ENCODE measurements at regions of chr17 and their contacts with region 1.

Region 1: DNA sequence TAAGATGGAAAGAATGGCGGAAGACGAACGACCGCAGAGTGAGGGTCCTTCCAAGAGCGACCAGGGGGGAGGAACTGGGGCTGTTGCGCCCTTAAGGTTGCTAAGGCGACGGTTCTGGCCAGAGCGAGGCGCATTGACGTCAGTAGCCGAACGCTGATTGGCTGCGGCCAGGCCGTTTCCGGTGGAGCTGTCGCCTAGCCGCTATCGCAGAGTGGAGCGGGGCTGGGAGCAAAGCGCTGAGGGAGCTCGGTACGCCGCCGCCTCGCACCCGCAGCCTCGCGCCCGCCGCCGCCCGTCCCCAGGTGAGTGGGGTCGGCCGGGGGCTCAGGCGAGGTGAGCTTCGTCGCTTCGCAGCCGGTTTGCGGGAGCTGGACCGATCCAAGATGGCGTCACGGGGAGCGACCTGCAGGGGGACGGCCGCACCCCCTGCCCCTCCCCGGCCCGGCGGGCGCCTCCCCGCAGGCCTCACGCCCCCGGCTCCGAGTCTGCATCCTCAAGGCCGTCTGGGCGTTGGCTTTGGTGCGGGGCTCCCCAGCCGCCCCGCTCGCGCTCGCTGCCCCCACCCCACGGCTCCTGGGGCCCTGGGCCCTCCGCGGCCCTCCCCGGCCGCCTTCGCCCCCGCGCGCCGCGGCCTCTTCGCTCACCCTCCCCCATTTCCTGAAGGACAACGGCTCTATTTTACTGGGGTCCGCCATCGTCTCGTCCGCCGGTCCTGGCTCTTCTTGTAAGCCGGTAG is at the start of gene PRKAR1A:
- DNase-seq: peak; percentile 93 to 97 (median 96)
- H3K4me3 ChIP-seq: peak within 1 kb of the TSS; percentile 95 to 96
- H3K4me3 Mint-ChIP-seq: peak within 1 kb of the TSS; percentile 97 to 100 (median 99)
- H3K27ac ChIP-seq: peak within 1 kb of the TSS; percentile 96
- H3K27ac Mint-ChIP-seq: peak within 1 kb of the TSS; percentile 96 to 100 (median 100)
- H3K4me1 ChIP-seq: peaks cover 30% of the 10 kb centered on the region
- H3K4me1 Mint-ChIP-seq: peaks cover 36 to 70% (median 43%) of the 10 kb centered on the region in 4 donors
- H3K27me3 ChIP-seq: no peaks in the 10 kb centered on the region
- H3K27me3 Mint-ChIP-seq: no peaks in the 10 kb centered on the region
- total RNA-seq, gene PRKAR1A: 182 to 183 TPM

Region 2: DNA sequence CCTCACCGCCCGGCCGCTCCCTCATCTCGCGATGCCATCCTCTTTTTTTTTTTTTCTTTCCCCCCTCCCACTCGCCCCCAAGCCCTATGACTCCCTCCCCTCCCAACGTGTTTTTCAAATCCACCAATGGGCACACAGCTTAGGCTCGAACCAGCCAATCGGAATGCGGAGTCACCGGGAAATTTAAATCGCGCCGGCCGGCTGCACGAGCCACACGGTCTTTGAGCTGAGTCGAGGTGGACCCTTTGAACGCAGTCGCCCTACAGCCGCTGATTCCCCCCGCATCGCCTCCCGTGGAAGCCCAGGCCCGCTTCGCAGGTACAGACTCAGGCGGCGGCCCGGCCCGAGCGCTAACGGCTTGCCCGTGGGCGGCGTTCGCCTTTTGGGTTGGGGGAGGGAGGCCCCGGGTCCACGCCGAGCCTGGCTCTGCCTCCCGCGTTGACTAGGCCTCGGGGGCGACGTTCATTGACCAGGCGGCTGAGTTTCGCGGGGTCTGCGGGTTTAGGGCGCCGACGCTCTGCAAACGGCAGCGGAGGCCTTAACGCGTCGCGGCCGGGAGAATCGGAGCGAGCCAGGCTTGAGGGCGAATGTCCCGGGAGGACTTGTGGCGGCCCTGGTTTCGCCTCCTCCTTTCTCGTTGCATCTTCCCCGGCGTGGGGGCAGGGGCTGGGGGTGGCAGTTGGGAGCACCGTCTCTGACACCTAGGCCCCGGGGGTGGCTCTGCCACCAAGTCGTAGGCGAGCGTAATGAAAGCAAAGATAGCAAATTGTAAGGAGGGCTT is 476.7 kb before region 1 on chr17 and contains the start of gene KPNA2:
- CTCF ChIA-PET with region 1: no interaction called
- POLR2A ChIA-PET with region 1: no interaction called
- intact Hi-C with region 1: loop called (anchors 5 kb)
- DNase-seq: peak; percentile 92 to 96 (median 94)
- H3K4me3 ChIP-seq: peak within 1 kb of the TSS; percentile 43 to 91
- H3K4me3 Mint-ChIP-seq: peak within 1 kb of the TSS; percentile 87 to 98 (median 96)
- H3K27ac ChIP-seq: peak within 1 kb of the TSS; percentile 85
- H3K27ac Mint-ChIP-seq: peak within 1 kb of the TSS; percentile 89 to 98 (median 95)
- H3K4me1 ChIP-seq: peaks cover 19% of the 10 kb centered on the region
- H3K4me1 Mint-ChIP-seq: peaks cover 8 to 24% (median 13%) of the 10 kb centered on the region in 4 donors
- H3K27me3 ChIP-seq: no peaks in the 10 kb centered on the region
- H3K27me3 Mint-ChIP-seq: no peaks in the 10 kb centered on the region
- total RNA-seq, gene KPNA2: 12.6 to 14.7 TPM

Region 3: GRCh38 chr17:68491381-68492231 is 20.8 kb before region 1 on chr17:
- CTCF ChIA-PET with region 1: interaction called, 5 read pairs
- POLR2A ChIA-PET with region 1: interaction called, 15 read pairs
- intact Hi-C with region 1: no loop called
- DNase-seq: no peak
- H3K4me3 ChIP-seq: no peak overlapping the region
- H3K4me3 Mint-ChIP-seq: no peak overlapping the region
- H3K27ac ChIP-seq: no peak overlapping the region
- H3K27ac Mint-ChIP-seq: no peak overlapping the region
- H3K4me1 ChIP-seq: peaks cover 17% of the 10 kb centered on the region
- H3K4me1 Mint-ChIP-seq: peaks cover 11 to 19% (median 15%) of the 10 kb centered on the region in 4 donors
- H3K27me3 ChIP-seq: no peaks in the 10 kb centered on the region
- H3K27me3 Mint-ChIP-seq: no peaks in the 10 kb centered on the region

Region 4: DNA sequence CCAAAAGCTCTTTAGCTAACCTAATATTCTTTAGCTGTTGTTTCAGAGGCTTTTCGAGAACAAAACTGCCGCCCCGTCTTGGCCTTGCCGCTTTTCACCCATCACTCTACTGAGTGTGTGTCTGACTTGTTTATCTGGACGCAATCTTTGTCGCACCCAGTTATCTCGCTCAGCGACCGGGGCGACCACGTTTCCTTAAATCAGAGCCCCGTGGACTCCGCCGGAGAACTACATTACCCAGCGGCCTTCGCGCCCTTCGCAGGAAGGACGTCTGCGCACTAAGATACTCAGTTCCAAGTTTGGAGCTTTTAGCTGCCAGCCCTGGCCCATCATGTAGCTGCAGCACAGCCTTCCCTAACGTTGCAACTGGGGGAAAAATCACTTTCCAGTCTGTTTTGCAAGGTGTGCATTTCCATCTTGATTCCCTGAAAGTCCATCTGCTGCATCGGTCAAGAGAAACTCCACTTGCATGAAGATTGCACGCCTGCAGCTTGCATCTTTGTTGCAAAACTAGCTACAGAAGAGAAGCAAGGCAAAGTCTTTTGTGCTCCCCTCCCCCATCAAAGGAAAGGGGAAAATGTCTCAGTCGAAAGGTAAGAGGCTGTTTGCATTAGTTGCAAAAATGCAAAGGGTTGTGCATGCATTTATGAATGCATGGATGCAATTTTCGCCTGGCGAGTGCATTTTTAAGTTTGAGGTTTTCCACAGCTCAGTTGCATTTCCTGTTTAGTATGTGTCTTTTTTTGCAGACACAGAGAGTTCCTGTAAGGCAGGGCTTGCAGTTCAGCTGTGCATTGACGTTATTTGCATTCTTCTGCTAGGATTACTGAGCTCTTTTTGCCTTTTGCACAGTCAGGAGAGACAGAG is 902.2 kb after region 1 on chr17 and contains the start of gene MAP2K6:
- CTCF ChIA-PET with region 1: no interaction called
- POLR2A ChIA-PET with region 1: no interaction called
- intact Hi-C with region 1: loop called (anchors 5 kb)
- DNase-seq: peak; percentile 76 to 87 (median 79)
- H3K4me3 ChIP-seq: peak within 1 kb of the TSS; percentile 13 to 90
- H3K4me3 Mint-ChIP-seq: peak within 1 kb of the TSS in 2 of 8 donors; percentile 4 to 21
- H3K27ac ChIP-seq: peak within 1 kb of the TSS; percentile 17
- H3K27ac Mint-ChIP-seq: peak within 1 kb of the TSS in 1 of 7 donors; percentile 40
- H3K4me1 ChIP-seq: peaks cover 42% of the 10 kb centered on the region
- H3K4me1 Mint-ChIP-seq: peaks cover 6 to 12% (median 7%) of the 10 kb centered on the region in 4 donors
- H3K27me3 ChIP-seq: no peaks in the 10 kb centered on the region
- H3K27me3 Mint-ChIP-seq: no peaks in the 10 kb centered on the region
- total RNA-seq, gene MAP2K6: 16.5 to 18.3 TPM

Measured in CD4-positive, alpha-beta memory T cell (primary cell).